ENCODE measurements at regions of chr2 and their contacts with region 1.

Region 1: DNA sequence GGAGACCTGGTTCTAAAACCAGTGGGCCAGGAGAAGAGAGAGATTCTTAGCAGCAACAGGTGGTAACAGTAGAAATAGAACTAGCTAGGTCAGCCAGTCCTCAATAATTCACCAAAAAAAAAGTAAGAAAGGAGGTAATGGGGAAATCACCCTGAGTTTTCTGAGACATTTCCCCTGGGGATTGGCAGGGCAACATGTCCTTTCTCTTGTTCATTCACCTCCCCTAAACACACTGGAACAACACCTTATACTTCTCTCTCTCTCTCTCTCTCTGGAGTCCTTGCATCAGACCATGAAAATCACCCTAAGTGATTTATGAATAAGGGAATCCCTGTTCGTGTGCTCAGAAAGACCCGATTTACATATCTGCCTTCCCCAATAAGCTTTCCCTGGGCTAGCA is 64.8 kb downstream of the COX7A2L start:
- DNase-seq: no peak
- ATAC-seq: peak; percentile 89
- H3K4me3 Mint-ChIP-seq: peak overlapping the region; percentile 36
- H3K27ac Mint-ChIP-seq: peak overlapping the region; percentile 64
- H3K4me1 Mint-ChIP-seq: peaks cover 29% of the 10 kb centered on the region
- H3K27me3 Mint-ChIP-seq: no peaks in the 10 kb centered on the region
- CTCF ChIP-seq: no peak

Region 2: GRCh38 chr2:42127425-42128424 is 168.5 kb before region 1 on chr2:
- CTCF ChIA-PET with region 1: no interaction called
- POLR2A ChIA-PET with region 1: no interaction called
- intact Hi-C with region 1: no loop called
- DNase-seq: no peak
- ATAC-seq: peak; percentile 57
- H3K4me3 Mint-ChIP-seq: peak overlapping the region; percentile 66
- H3K27ac Mint-ChIP-seq: peak overlapping the region; percentile 75
- H3K4me1 Mint-ChIP-seq: peaks cover 89% of the 10 kb centered on the region
- H3K27me3 Mint-ChIP-seq: no peaks in the 10 kb centered on the region
- CTCF ChIP-seq: no peak

Region 3: DNA sequence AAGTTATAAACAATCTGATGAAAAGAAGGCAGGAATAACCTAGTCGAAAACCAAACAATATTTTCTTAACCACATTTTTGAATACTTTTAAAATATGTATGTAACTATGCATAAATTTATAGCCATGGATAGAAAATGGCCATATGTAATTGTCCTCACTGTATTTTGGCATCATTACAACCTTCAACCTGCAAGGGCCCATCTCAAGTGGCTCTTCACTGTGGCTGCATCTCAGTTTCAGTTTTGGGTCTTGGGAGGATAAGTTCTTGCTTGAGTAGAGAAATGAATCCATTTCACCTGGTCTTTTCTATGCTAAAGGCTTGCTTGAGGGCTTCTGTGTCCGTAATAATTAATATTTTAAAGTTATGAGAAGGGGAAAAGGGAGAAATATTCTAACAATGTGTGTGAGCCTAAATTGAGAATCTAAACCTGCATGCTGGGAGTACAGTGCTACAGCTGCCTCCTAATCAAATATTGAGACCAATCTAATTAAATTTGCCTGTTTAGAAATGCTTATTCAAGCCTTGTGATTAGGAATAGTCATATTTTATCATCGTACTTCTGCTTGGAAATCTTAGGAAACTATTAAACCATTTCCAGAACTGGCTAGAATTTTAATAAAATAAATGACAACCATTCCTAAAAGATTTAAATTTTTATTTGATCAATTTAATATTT is 34.6 kb before region 1 on chr2:
- CTCF ChIA-PET with region 1: no interaction called
- POLR2A ChIA-PET with region 1: no interaction called
- intact Hi-C with region 1: loop called (anchors 5 kb)
- DNase-seq: no peak
- ATAC-seq: no peak
- H3K4me3 Mint-ChIP-seq: no peak overlapping the region
- H3K27ac Mint-ChIP-seq: no peak overlapping the region
- H3K4me1 Mint-ChIP-seq: peaks cover 6% of the 10 kb centered on the region
- H3K27me3 Mint-ChIP-seq: no peaks in the 10 kb centered on the region
- CTCF ChIP-seq: no peak

Region 4: GRCh38 chr2:42281416-42282081 is 14.7 kb before region 1 on chr2:
- CTCF ChIA-PET with region 1: no interaction called
- POLR2A ChIA-PET with region 1: no interaction called
- intact Hi-C with region 1: loop called (anchors 2 kb)
- DNase-seq: no peak
- ATAC-seq: no peak
- H3K4me3 Mint-ChIP-seq: no peak overlapping the region
- H3K27ac Mint-ChIP-seq: peak overlapping the region; percentile 15
- H3K4me1 Mint-ChIP-seq: no peaks in the 10 kb centered on the region
- H3K27me3 Mint-ChIP-seq: no peaks in the 10 kb centered on the region
- CTCF ChIP-seq: no peak

Region 5: GRCh38 chr2:42314892-42315467 is 18.8 kb after region 1 on chr2:
- CTCF ChIA-PET with region 1: no interaction called
- POLR2A ChIA-PET with region 1: no interaction called
- intact Hi-C with region 1: loop called (anchors 2 kb)
- DNase-seq: no peak
- ATAC-seq: no peak
- H3K4me3 Mint-ChIP-seq: no peak overlapping the region
- H3K27ac Mint-ChIP-seq: no peak overlapping the region
- H3K4me1 Mint-ChIP-seq: no peaks in the 10 kb centered on the region
- H3K27me3 Mint-ChIP-seq: no peaks in the 10 kb centered on the region
- CTCF ChIP-seq: no peak

Measured in activated B cell treated with CpG ODN at 0.5 μM for 24 hours (primary cell).